Dendritic cell treated with granulocyte-macrophage colony-stimulating factor and Interleukin-4, amounts not matched to agents 40 ng/mL and 50 ng/mL, for 4 days (primary cell): ENCODE measurements at regions of chr20 and their contacts with region 1.

Region 1: GRCh38 chr20:36573103-36573794 is at the start of gene TGIF2:
- H3K4me3 Mint-ChIP-seq: peak within 1 kb of the TSS; percentile 83
- H3K27ac Mint-ChIP-seq: peak within 1 kb of the TSS; percentile 78
- H3K4me1 Mint-ChIP-seq: peaks cover 33% of the 10 kb centered on the region
- H3K27me3 Mint-ChIP-seq: peaks cover 4% of the 10 kb centered on the region

Region 2: DNA sequence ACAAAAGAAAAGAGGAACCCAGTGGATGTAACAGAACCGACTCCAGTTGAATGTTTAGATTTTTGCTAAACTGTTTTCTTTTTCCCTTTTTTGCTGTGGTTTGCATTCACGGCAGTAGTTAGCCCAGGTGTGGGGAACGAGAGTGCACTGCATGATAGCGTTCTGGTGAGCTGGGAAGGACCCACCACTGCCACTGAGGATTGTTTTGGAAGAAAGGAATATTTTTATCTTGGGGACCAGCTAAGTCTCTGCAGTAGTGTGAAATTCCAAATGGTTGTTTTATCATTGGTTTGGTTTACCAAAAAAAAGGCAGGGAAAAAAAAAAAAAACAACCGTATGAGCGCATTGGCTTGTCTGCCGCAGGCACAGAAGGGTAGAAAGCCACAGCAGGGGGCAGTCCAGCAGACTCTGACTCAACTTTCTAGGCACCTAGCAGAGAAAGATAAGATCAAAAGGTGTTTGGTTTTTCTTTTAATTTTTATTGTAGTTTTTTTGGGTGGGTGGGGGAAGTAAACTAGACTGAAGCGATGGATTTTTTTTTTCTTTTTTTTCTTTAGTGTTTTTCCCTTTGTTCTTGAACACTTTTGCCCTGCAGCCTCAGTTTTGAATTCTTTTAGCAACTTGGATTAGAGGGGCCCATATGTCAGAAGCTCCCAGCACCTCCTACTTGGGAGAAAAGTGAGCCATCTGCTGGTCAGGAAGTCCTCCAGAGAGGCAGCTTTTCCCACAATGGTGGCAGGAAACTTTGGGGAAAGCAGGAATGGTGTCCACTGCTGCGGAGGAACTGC is 18.8 kb after region 1 on chr20:
- intact Hi-C with region 1: loop called (anchors 2 kb)
- H3K4me3 Mint-ChIP-seq: no peak overlapping the region
- H3K27ac Mint-ChIP-seq: peak overlapping the region; percentile 61
- H3K4me1 Mint-ChIP-seq: peaks cover 67% of the 10 kb centered on the region
- H3K27me3 Mint-ChIP-seq: no peaks in the 10 kb centered on the region